Calu3 (cell line): ENCODE measurements at regions of chr14 and their contacts with region 1.

Region 1: GRCh38 chr14:57533214-57533613 is 39.6 kb upstream of the CCDC198 start:
- DNase-seq: peak; percentile 28
- H3K4me3 Mint-ChIP-seq: no peak overlapping the region
- H3K27ac Mint-ChIP-seq: no peak overlapping the region
- H3K4me1 Mint-ChIP-seq: no peaks in the 10 kb centered on the region
- H3K27me3 Mint-ChIP-seq: no peaks in the 10 kb centered on the region
- CTCF ChIP-seq: peak; percentile 57

Region 2: DNA sequence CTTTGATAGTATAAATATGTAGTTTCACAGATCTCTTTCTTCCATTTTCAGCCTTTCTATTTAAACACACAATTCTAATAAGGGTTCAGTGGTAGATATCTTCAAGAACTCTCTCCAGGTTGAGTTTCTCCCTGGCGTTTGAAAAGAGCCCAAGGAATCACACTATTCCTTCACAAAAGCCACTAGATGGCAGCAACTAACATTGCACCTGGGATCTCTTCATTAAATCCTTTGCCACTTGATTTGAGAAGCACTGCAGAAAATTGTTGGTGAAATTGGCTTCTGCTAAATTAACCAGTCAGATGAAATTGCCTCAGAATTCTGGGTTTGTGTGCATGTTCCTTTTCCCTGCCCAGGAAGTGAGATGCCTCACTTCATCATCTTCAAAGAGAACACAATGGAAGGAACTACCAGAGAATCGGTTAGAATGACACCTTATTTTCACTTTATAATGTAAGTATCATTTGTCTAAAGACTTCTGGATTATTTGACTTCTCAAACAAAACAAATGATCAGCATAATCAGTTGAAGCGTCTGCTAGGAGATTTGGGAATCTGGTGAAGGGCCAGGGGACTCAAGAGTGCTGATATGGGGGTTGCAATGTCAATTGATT is 46.3 kb before region 1 on chr14:
- CTCF ChIA-PET with region 1: no interaction called
- intact Hi-C with region 1: loop called (anchors 1 kb)
- DNase-seq: peak; percentile 17
- H3K4me3 Mint-ChIP-seq: no peak overlapping the region
- H3K27ac Mint-ChIP-seq: no peak overlapping the region
- H3K4me1 Mint-ChIP-seq: peaks cover 7% of the 10 kb centered on the region
- H3K27me3 Mint-ChIP-seq: no peaks in the 10 kb centered on the region
- CTCF ChIP-seq: peak; percentile 52

Region 3: GRCh38 chr14:57493467-57494181 is 39.6 kb before region 1 on chr14 and contains the start of gene CCDC198:
- CTCF ChIA-PET with region 1: no interaction called
- intact Hi-C with region 1: loop called (anchors 2 kb)
- DNase-seq: peak; percentile 71
- H3K4me3 Mint-ChIP-seq: peak within 1 kb of the TSS; percentile 82
- H3K27ac Mint-ChIP-seq: peak within 1 kb of the TSS; percentile 97
- H3K4me1 Mint-ChIP-seq: peaks cover 16% of the 10 kb centered on the region
- H3K27me3 Mint-ChIP-seq: no peaks in the 10 kb centered on the region
- CTCF ChIP-seq: no peak
- total RNA-seq, gene CCDC198: 58.7 and 81.3 TPM in 2 replicates

Region 4: DNA sequence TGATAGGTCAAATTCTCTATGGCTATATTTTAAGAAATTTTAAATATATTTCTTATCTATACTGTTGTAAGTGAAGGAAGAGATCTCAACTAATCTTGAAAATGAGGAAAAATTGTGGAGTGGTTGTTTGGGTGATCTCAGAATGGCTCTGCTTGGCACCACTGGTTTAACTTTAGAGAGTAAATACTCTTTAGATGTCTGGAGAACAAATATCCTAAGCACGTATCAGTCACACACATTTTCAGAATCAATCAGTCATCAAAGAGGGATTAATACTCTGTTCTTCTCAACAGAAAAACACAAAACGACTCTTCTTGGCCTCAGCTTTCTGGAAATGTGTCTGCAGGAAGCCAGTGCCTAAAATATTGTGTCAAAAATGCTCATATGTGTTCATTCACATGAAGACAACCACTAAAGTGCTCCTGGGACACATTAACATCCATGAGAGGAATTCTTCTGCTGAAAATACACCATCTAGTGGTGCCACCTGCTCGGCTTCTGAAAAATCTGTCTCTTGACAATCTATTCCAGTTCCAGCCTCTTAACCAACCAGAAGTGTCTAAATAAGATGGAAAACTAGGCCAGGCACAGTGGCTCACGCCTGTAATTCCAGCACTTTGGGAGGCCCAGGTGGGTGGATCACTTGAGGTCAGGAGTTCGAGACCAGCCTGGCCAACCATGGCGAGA is 41.5 kb after region 1 on chr14:
- CTCF ChIA-PET with region 1: no interaction called
- intact Hi-C with region 1: loop called (anchors 2 kb)
- DNase-seq: peak; percentile 34
- H3K4me3 Mint-ChIP-seq: no peak overlapping the region
- H3K27ac Mint-ChIP-seq: no peak overlapping the region
- H3K4me1 Mint-ChIP-seq: no peaks in the 10 kb centered on the region
- H3K27me3 Mint-ChIP-seq: no peaks in the 10 kb centered on the region
- CTCF ChIP-seq: no peak

Region 5: GRCh38 chr14:57871459-57872080 is 338.4 kb after region 1 on chr14:
- CTCF ChIA-PET with region 1: no interaction called
- intact Hi-C with region 1: loop called (anchors 5 kb)
- DNase-seq: peak; percentile 57
- H3K4me3 Mint-ChIP-seq: no peak overlapping the region
- H3K27ac Mint-ChIP-seq: no peak overlapping the region
- H3K4me1 Mint-ChIP-seq: peaks cover 9% of the 10 kb centered on the region
- H3K27me3 Mint-ChIP-seq: peaks cover 30% of the 10 kb centered on the region
- CTCF ChIP-seq: peak; percentile 59

Region 6: DNA sequence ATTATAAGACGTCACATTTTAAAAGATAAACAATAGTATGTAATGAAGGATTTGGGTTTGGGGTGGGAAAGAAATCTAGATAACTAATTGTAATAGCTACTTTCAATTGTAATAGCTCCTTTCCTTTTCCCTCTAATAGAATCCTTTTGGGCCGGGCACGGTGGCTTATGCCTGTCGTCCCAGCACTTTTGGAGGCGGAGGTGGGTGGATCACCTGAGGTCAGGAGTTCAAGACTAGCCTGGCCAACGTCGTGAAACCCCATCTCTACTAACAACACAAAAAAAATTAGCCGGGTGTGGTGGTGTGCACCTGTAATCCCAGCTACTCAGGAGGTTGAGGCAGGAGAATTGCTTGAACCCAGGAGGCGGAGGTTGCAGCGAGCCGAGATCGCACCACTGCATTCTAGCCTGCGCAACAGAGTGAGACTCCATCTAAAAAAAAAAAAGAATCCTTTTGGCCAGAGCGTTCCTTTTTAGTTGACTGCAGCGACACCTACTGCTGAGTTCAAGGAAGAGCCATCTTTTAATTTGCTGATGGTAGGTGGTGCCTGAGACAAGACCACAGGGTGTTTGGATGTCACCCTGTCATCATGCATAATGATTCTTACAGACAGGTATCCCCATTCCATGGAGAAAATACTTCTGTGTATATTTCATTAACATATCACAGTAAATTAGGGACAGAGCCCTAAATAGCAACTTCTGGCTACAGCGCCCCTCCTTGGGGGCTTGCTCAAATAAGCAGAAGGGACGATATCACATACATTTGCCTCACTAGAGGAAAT is 539.3 kb after region 1 on chr14:
- CTCF ChIA-PET with region 1: no interaction called
- intact Hi-C with region 1: loop called (anchors 2 kb)
- DNase-seq: peak; percentile 63
- H3K4me3 Mint-ChIP-seq: no peak overlapping the region
- H3K27ac Mint-ChIP-seq: no peak overlapping the region
- H3K4me1 Mint-ChIP-seq: no peaks in the 10 kb centered on the region
- H3K27me3 Mint-ChIP-seq: peaks cover 24% of the 10 kb centered on the region
- CTCF ChIP-seq: peak; percentile 30